ENCODE measurements at regions of chr20 and their contacts with region 1.

Region 1: GRCh38 chr20:45456632-45457031 is 12.9 kb upstream of the WFDC2 start:
- DNase-seq: peak; percentile 71
- ATAC-seq: peak; percentile 94
- H3K4me3 ChIP-seq: no peak overlapping the region
- H3K27ac ChIP-seq: no peak overlapping the region
- H3K4me1 ChIP-seq: peaks cover 0 to 6% of the 10 kb centered on the region in 2 experiments; a peak in 2 of 4 replicates
- H3K27me3 ChIP-seq: no peaks in the 10 kb centered on the region
- CTCF ChIP-seq: peak; percentile 53 to 65 (median 63)
- POLR2A ChIP-seq: no peak
- RAD21 ChIP-seq: peak; percentile 62

Region 2: DNA sequence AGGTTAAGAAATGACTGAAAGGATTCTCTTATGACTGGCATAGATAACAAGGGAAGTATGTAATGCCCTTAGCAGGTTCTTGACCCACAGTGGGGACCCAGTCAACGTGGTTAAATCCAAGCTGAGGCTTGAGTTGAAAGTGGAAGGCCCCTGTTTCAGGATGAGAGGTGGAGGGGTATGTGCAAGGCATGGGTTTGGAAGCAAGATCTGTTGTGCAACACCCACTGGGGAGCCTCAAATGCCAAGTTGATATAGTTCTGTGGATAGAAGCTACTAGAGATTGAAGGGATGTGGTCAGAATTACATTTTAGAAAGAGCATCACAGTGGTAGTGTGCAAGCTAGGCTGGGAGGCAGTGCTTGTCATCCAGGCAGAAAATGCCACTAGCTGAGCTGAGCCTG is 541.7 kb before region 1 on chr20:
- CTCF ChIA-PET with region 1: no interaction called
- POLR2A ChIA-PET with region 1: no interaction called
- RAD21 ChIA-PET with region 1: no interaction called
- intact Hi-C with region 1: no loop called
- DNase-seq: no peak
- ATAC-seq: no peak
- H3K4me3 ChIP-seq: no peak overlapping the region
- H3K27ac ChIP-seq: no peak overlapping the region
- H3K4me1 ChIP-seq: peaks cover 6 to 8% of the 10 kb centered on the region in 2 experiments; a peak in 2 of 4 replicates
- H3K27me3 ChIP-seq: no peaks in the 10 kb centered on the region
- CTCF ChIP-seq: no peak
- POLR2A ChIP-seq: no peak
- RAD21 ChIP-seq: no peak

Region 3: DNA sequence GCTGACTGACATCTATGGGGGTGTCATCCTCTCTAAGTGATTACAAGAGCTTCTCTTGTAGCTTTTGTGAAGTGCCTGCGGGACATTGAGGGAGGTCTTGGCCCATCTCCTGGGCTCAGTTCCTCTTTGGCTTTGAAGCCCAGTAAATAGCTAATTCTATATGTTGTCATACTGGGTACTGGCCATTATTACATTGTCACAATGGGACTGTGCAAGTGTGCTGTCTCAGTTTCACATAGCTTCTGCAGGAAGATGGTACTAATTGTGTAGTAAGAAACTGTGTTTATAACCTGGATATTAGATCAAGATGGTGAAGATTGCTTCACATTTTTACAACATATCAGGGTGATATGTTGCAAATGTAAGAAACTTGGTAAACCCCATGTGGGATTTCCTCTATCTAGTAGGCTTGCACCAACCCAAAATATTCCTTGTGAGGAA is 38.9 kb after region 1 on chr20:
- CTCF ChIA-PET with region 1: no interaction called
- POLR2A ChIA-PET with region 1: no interaction called
- RAD21 ChIA-PET with region 1: no interaction called
- intact Hi-C with region 1: loop called (anchors 1 kb)
- DNase-seq: no peak
- ATAC-seq: no peak
- H3K4me3 ChIP-seq: no peak overlapping the region
- H3K27ac ChIP-seq: no peak overlapping the region
- H3K4me1 ChIP-seq: no peaks in the 10 kb centered on the region
- H3K27me3 ChIP-seq: peaks cover 19% of the 10 kb centered on the region; the same call in 1 of the 2 replicates
- CTCF ChIP-seq: no peak
- POLR2A ChIP-seq: no peak
- RAD21 ChIP-seq: no peak